Cardiac septum (tissue), 1 donor: ENCODE measurements at regions of chr18 and their contacts with region 1.

Region 1: GRCh38 chr18:23356915-23357601 is 96.0 kb upstream of the RIOK3 start:
- DNase-seq: no peak

Region 2: GRCh38 chr18:22983175-22983574 is 373.9 kb before region 1 on chr18:
- intact Hi-C with region 1: no loop called
- DNase-seq: no peak

Region 3: GRCh38 chr18:23032030-23032582 is 325.0 kb before region 1 on chr18:
- intact Hi-C with region 1: loop called (anchors 5 kb)
- DNase-seq: no peak

Region 4: GRCh38 chr18:23228102-23229061 is 128.7 kb before region 1 on chr18:
- intact Hi-C with region 1: loop called (anchors 5 kb)
- DNase-seq: no peak

Region 5: GRCh38 chr18:23259701-23260582 is 97.1 kb before region 1 on chr18:
- intact Hi-C with region 1: loop called (anchors 10 kb)
- DNase-seq: peak; percentile 88

Region 6: GRCh38 chr18:23416298-23416697 is 59.2 kb after region 1 on chr18:
- intact Hi-C with region 1: loop called (anchors 10 kb)
- DNase-seq: no peak

Region 7: GRCh38 chr18:24397694-24398365 is 1040.8 kb after region 1 on chr18 and contains the start of gene OSBPL1A:
- intact Hi-C with region 1: no loop called
- DNase-seq: peak; percentile 98
- total RNA-seq, gene OSBPL1A: 49.4 TPM